Posterior cingulate gyrus (tissue), 11 donors: ENCODE measurements at regions of chr4 and their contacts with region 1.

Region 1: DNA sequence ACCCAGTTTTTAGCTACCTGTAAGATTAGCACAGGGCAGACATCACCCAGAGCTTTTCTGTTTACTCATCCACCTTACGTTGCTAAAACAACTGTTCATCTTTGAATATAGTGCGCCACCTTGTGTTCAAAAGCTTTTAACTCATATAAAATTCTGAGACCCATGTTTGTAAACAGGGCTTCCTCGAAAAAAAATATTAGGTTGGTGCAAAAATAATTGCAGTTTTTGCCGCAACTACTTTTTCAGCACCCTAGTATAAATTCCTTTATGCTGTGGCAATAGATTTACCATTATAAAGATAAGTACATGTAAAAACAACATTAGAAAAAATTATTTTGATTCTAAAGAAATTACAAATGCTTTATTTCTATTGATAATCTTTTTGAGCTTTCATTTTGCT is 147.9 kb downstream of the LRBA start:
- DNase-seq: no peak

Region 2: GRCh38 chr4:149344436-149344835 is 1522.7 kb before region 1 on chr4:
- intact Hi-C with region 1: no loop called
- DNase-seq: no peak

Region 3: GRCh38 chr4:149980941-149981340 is 886.2 kb before region 1 on chr4:
- intact Hi-C with region 1: loop called (anchors 5 kb)
- DNase-seq: peak in 9 of 10 donors; percentile 28 to 84 (median 67)

Region 4: DNA sequence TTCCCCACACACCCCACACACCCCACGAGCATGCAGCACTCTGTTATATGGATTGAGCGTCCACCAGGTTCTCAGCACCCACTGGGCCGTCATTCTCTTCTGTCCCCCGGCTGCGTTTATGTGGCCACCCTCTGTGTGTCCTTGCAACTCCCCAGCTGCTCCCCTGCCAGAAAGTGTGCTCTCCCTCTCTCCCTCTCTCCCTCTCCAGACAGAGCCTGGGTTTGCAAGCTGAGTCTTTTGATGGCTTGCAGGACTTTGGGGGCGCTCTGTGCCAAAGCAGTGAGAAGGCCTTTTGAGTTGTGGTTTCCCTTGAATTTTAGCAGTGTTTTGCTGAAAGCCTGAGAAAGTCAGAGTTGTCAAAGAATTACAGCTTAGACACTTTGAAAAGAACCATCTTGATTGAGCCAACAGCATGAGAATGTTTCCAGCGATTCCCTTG is 615.4 kb before region 1 on chr4:
- intact Hi-C with region 1: no loop called
- DNase-seq: no peak

Region 5: DNA sequence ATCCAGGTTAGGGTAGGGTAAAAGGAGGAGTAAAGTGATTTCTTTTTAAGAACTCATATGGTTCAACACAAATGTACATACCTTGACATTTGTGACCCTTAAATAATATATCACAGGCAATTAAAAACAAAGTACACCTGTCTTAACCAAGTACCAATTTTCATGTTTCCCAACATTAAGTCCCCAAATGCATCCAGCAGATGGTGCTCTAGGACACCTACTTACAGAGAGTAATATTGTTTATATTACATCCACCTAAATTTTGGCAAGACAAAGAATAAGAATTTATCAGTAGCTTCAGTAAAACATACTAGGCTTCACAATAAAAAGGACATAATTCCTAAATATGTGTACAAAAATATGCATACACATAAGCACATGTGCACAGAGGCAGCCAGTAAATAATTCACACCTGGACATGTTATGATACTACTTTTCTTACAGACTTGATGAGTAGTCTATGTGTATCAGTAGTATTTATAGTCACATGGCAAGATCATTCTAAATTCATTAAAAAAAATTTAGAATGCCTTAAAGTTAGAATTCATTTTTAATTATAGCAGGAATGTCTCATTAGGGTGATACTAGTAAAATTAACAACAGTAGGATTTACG is 569.2 kb before region 1 on chr4:
- intact Hi-C with region 1: loop called (anchors 2 kb)
- DNase-seq: peak in 2 of 10 donors; percentile 17 to 23

Region 6: GRCh38 chr4:151074416-151074916 is 207.3 kb after region 1 on chr4:
- intact Hi-C with region 1: no loop called
- DNase-seq: no peak